Activated B cell treated with CpG ODN at 0.5 μM for 24 hours (primary cell): ENCODE measurements at regions of chr10 and their contacts with region 1.

Region 1: DNA sequence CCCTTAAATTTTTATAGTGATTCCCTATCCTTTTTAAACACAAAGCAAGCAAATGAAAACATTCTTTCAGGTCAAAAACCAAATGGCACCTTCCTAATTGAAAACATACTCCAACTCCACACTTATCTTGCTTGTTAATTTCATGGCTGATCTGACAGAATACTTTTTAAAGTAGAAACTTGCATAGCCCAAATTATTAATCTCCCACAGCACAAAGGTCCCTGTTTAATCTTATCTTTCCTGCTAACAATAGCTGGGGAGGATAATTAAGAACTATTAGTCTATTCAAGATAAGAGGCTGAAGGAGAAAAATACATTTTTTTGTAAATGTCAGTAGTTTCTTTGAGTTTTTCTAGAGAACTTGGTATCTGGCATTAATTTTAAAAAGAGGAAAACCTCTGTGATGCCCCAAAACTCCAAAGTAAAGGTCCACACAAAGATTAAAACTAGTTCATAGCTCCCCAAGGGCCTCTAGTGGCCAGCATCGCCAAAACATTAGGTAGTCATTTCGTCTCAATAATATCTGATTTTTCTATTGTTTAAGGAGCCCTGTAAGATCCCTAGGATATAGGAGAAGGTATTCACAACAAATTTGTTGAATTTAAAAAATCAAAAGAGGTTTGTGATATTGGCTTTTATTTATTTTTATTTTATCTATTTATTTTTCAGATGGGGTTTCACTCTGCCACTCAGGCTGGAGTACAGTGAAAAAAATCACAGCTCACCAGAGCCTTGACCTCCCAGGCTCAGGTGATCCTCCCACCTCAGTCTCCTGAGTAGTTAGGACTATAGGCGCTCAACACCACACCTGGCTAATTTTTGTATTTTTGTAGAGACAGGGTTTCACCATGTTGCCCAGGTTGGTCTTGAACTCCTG is 14.7 kb downstream of the CDNF start:
- DNase-seq: no peak
- ATAC-seq: peak; percentile 74
- H3K4me3 Mint-ChIP-seq: no peak overlapping the region
- H3K27ac Mint-ChIP-seq: peak overlapping the region; percentile 26
- H3K4me1 Mint-ChIP-seq: peaks cover 24% of the 10 kb centered on the region
- H3K27me3 Mint-ChIP-seq: no peaks in the 10 kb centered on the region
- CTCF ChIP-seq: peak; percentile 25

Region 2: GRCh38 chr10:14195433-14195832 is 627.7 kb before region 1 on chr10:
- CTCF ChIA-PET with region 1: interaction called, 11 read pairs
- POLR2A ChIA-PET with region 1: no interaction called
- intact Hi-C with region 1: loop called (anchors 2 kb)
- DNase-seq: no peak
- ATAC-seq: no peak
- H3K4me3 Mint-ChIP-seq: no peak overlapping the region
- H3K27ac Mint-ChIP-seq: no peak overlapping the region
- H3K4me1 Mint-ChIP-seq: peaks cover 5% of the 10 kb centered on the region
- H3K27me3 Mint-ChIP-seq: peaks cover 36% of the 10 kb centered on the region
- CTCF ChIP-seq: no peak

Region 3: DNA sequence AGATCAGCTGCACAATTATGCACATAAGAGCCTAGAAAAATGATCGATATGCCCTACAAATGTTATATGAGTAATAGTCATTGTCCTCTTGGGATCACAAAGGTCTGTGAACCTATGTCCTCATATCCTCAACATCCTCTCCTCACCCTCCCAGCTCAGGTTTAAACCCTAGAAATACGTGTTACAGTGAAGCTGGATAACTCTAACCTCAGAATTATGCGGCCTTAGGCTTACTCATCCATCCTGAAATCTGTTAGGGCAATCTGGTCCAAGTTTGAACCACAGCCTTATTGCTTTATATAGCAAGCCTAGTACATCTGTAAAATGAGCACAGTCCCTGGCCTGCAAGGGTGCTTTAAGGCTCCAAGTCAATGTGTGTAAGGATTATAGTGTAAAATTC is 408.2 kb before region 1 on chr10:
- CTCF ChIA-PET with region 1: no interaction called
- POLR2A ChIA-PET with region 1: no interaction called
- intact Hi-C with region 1: no loop called
- DNase-seq: no peak
- ATAC-seq: no peak
- H3K4me3 Mint-ChIP-seq: no peak overlapping the region
- H3K27ac Mint-ChIP-seq: no peak overlapping the region
- H3K4me1 Mint-ChIP-seq: peaks cover 7% of the 10 kb centered on the region
- H3K27me3 Mint-ChIP-seq: peaks cover 25% of the 10 kb centered on the region
- CTCF ChIP-seq: no peak

Region 4: GRCh38 chr10:14536241-14537213 is 286.6 kb before region 1 on chr10:
- CTCF ChIA-PET with region 1: interaction called, 34 read pairs
- POLR2A ChIA-PET with region 1: interaction called, 5 read pairs
- intact Hi-C with region 1: loop called (anchors 1 kb)
- DNase-seq: no peak
- ATAC-seq: peak; percentile 60
- H3K4me3 Mint-ChIP-seq: no peak overlapping the region
- H3K27ac Mint-ChIP-seq: peak overlapping the region; percentile 41
- H3K4me1 Mint-ChIP-seq: peaks cover 37% of the 10 kb centered on the region
- H3K27me3 Mint-ChIP-seq: no peaks in the 10 kb centered on the region
- CTCF ChIP-seq: no peak

Region 5: DNA sequence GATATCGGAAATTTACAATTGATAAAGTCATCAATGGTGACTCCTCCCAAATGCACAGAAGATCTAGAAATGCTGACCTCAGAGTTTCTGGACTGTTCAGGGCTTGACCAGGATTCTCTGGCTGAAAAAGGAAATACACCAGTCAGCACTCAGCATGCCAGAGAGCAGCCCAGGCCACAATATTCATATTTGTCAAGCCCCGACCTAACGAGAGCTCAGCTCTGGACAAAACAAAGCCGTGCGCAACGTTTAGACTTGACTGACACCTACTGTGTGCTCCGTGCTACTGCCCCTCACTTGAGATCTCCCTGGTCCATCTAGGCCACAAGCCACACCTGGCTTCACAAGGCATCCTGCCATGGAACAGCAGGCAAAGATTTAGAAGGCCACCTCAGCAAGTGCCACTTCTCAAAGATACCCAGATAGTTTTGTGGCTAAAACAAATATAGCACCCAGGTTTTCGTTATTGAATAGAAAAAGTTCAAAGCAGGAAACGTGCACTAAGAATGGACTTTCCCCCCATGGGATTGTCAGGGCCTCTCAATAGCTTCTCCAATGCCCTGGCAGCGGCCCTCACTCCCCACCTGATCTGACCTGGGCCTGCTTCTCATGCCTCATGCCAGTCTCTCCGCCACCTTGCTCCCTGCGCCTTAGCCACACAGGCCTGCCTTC is 266.7 kb before region 1 on chr10:
- CTCF ChIA-PET with region 1: interaction called, 15 read pairs
- POLR2A ChIA-PET with region 1: no interaction called
- intact Hi-C with region 1: no loop called
- DNase-seq: no peak
- ATAC-seq: peak; percentile 49
- H3K4me3 Mint-ChIP-seq: peak overlapping the region; percentile 59
- H3K27ac Mint-ChIP-seq: peak overlapping the region; percentile 91
- H3K4me1 Mint-ChIP-seq: peaks cover 96% of the 10 kb centered on the region
- H3K27me3 Mint-ChIP-seq: no peaks in the 10 kb centered on the region
- CTCF ChIP-seq: no peak

Region 6: DNA sequence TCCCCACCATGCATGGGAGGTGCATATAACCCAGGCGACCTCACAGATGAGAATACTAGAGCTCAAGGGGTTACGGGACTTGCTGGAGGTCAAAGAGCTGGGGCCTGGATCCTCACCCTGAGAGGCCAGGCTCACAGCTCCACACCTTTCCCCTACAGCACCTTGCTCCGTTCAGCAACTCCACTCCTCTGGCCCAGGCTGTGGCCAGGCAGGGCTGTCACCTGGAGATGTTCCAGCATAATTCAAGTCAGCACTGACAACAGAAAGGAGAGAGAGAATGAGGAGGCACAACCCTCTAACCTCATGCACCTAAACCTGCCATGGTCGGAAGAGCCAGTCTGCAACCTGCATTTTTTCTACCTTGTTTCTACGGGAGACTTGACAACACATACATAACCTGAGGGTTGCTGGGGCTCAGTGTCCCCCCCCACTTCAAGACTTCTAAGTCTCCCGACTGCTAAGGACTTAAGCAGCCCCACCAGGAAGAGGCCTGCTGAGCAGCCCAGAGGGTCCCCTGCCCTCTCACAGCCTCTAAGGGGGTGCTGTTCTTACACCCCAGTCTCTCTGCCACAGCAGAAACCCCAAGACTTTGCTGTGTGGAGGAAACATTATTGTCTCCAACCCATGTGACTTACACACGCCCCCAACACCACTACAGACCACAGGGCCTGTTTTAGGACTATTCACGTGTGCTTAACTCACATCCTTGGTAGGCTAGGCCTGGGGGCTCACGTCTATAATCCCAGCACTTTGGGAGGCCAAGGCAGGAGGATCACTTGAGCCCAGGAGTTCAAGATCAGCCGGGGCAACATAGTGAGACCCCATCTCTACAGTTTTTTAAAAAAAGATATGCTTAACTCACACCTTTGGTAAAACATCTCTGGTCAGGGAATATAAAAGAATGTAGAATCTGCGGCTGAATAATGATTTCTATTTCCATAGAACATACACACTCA is 224.0 kb before region 1 on chr10:
- CTCF ChIA-PET with region 1: interaction called, 8 read pairs
- POLR2A ChIA-PET with region 1: interaction called, 14 read pairs
- intact Hi-C with region 1: loop called (anchors 1 kb)
- DNase-seq: no peak
- ATAC-seq: no peak
- H3K4me3 Mint-ChIP-seq: peak overlapping the region; percentile 29
- H3K27ac Mint-ChIP-seq: peak overlapping the region; percentile 75
- H3K4me1 Mint-ChIP-seq: peaks cover 76% of the 10 kb centered on the region
- H3K27me3 Mint-ChIP-seq: no peaks in the 10 kb centered on the region
- CTCF ChIP-seq: no peak

Region 7: DNA sequence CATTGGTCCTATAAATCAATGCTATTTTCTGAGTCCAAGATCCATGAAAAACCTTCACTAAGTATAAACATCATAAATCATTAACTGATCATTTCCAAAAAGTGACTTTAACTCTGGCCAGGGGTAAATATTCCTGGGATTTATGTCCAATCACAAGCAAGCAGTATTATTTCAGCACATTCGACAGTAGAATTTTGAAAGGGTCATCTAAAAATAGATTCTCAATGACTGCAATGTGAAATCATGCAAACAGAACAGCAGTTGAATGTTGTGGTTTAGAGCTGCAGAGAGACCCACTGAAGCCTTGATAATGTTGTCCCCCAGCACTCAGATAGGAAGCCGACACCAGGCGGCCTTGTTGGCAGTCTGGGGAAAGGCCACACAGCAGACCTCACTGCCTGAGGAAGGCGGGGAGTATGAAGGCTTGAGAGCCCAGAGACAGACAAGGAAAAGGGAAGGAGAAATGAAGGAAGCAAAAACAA is 86.5 kb before region 1 on chr10:
- CTCF ChIA-PET with region 1: interaction called, 5 read pairs
- POLR2A ChIA-PET with region 1: no interaction called
- intact Hi-C with region 1: loop called (anchors 1 kb)
- DNase-seq: no peak
- ATAC-seq: peak; percentile 76
- H3K4me3 Mint-ChIP-seq: peak overlapping the region; percentile 73
- H3K27ac Mint-ChIP-seq: peak overlapping the region; percentile 98
- H3K4me1 Mint-ChIP-seq: peaks cover 76% of the 10 kb centered on the region
- H3K27me3 Mint-ChIP-seq: no peaks in the 10 kb centered on the region
- CTCF ChIP-seq: no peak

Region 8: GRCh38 chr10:14751014-14751896 is 71.9 kb before region 1 on chr10:
- CTCF ChIA-PET with region 1: interaction called, 11 read pairs
- POLR2A ChIA-PET with region 1: interaction called, 6 read pairs
- intact Hi-C with region 1: no loop called
- DNase-seq: peak; percentile 60
- ATAC-seq: peak; percentile 78
- H3K4me3 Mint-ChIP-seq: peak overlapping the region; percentile 70
- H3K27ac Mint-ChIP-seq: peak overlapping the region; percentile 97
- H3K4me1 Mint-ChIP-seq: peaks cover 71% of the 10 kb centered on the region
- H3K27me3 Mint-ChIP-seq: no peaks in the 10 kb centered on the region
- CTCF ChIP-seq: no peak